Panc1 (cell line): ENCODE measurements at regions of chr18 and their contacts with region 1.

Region 1: DNA sequence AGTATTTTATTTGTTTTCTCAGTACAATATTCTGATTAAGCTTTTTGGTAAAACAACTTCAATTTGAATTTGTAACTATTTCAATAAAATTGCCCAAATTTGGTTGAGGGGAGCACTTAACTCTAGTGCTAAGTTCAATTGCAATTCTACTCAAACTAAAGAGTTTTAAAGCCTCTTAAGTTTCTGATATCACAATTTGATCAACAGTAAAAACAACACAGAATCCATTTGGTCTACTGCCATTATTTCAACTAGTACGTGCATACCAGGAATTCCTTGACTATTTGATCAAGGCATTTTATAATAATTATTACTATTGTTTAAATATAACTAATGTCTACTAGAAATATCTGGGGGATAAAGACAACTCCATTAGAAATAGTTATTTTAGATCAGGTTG is 150.9 kb downstream of the ROCK1 start:
- DNase-seq: no peak
- ATAC-seq: no peak
- H3K4me3 ChIP-seq: no peak overlapping the region
- H3K27ac ChIP-seq: no peak overlapping the region
- H3K4me1 ChIP-seq: no peaks in the 10 kb centered on the region
- H3K27me3 ChIP-seq: no peaks in the 10 kb centered on the region
- CTCF ChIP-seq: no peak

Region 2: DNA sequence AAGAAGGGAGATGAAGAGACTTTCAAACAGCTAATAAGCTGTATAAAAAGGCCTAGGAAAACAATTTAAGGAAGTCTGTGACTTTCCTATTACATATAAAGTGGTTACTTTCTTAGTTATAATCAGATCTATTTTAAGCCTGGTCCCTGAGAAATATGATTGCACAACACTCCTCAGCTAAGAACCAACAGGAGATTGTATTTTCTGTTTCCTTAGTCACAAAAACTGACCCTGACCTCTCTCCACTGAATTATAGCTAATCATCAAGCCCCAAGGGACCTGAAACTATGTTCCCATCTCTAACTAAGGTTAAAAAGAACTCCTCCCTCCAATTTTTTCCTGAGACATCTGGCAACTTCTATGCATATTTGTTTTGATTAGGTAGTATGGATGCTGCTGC is 44.0 kb after region 1 on chr18:
- CTCF ChIA-PET with region 1: no interaction called
- POLR2A ChIA-PET with region 1: no interaction called
- in situ Hi-C with region 1: no loop called
- intact Hi-C with region 1: loop called (anchors 5 kb)
- DNase-seq: no peak
- ATAC-seq: no peak
- H3K4me3 ChIP-seq: no peak overlapping the region
- H3K27ac ChIP-seq: no peak overlapping the region
- H3K4me1 ChIP-seq: no peaks in the 10 kb centered on the region
- H3K27me3 ChIP-seq: no peaks in the 10 kb centered on the region
- CTCF ChIP-seq: no peak